Activated CD4-positive, alpha-beta T cell treated with anti-CD3 and anti-CD28 coated beads for 36 hours (primary cell): ENCODE measurements at regions of chr17 and their contacts with region 1.

Region 1: DNA sequence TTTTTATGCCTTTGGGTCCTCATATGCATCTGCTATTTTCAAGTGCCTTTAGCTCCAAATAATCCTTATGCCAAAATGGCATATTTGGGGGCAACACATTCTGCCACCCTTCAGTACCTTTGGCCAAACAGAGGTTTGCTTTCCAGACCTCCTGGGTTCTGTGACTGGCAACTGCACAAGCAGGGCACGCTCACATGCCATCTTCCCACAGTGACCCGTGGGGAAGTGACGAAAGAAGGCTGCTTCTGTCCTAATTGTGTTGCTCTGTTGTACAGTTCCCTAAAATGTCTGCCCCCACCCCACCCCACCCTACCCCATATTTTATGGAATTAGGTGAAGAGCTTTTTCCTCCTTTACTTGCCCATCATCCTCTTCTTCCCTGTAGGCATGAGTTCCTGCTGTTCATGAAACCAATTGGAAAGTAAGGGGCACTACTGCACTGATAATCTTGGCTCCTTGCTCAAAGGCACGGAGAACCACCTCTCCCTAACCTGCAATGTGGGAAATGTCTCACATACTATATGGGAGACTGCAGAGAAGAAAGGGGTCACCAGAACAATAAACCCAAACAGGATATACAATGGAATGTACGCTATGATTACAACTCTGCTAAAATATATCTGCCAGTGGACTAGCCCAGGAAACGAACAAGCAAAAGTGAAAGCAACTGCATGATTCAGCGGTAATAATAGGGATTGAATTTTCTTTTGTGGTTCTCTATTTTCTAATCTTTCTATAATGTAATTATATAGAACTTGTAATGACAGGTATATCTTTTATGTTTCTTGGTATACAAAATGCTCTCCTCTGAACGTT is 3.3 kb upstream of the SLFN12L start:
- DNase-seq: peak; percentile 62
- ATAC-seq: no peak
- H3K4me3 Mint-ChIP-seq: peak overlapping the region; percentile 78
- H3K27ac Mint-ChIP-seq: peak overlapping the region; percentile 100
- H3K4me1 Mint-ChIP-seq: peaks cover 48% of the 10 kb centered on the region
- H3K27me3 Mint-ChIP-seq: no peaks in the 10 kb centered on the region

Region 2: GRCh38 chr17:35170968-35171771 is 369.6 kb before region 1 on chr17:
- CTCF ChIA-PET with region 1: interaction called, 12 read pairs
- POLR2A ChIA-PET with region 1: interaction called, 4 read pairs
- intact Hi-C with region 1: loop called (anchors 1 kb)
- DNase-seq: peak; percentile 32
- ATAC-seq: peak; percentile 76
- H3K4me3 Mint-ChIP-seq: no peak overlapping the region
- H3K27ac Mint-ChIP-seq: peak overlapping the region; percentile 47
- H3K4me1 Mint-ChIP-seq: peaks cover 39% of the 10 kb centered on the region
- H3K27me3 Mint-ChIP-seq: no peaks in the 10 kb centered on the region

Region 3: DNA sequence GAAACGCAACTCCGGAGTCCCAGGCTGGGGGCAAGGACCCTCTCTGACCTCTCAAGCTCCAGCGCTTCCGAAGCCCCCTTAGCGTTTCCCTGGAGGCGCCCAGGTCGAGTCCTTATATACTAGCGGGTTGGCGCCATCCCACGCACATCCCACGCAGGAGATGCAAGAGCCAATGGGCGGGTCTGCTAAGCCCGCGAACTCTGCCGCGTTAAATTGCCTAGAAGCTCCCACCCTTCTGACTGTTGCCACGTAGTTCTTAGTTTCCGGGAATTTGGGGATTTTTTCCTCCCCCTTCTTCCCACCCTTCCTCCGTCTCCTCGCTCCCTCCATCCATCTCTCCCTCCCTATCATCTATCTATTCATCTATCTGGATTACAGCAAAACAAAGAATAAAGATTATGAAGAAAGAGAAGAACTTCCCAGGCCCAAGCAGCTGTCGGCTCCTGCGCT is 167.2 kb before region 1 on chr17 and contains the start of gene SLFN11:
- CTCF ChIA-PET with region 1: interaction called, 5 read pairs
- POLR2A ChIA-PET with region 1: interaction called, 32 read pairs
- intact Hi-C with region 1: loop called (anchors 1 kb)
- DNase-seq: peak; percentile 95
- ATAC-seq: peak; percentile 70
- H3K4me3 Mint-ChIP-seq: peak within 1 kb of the TSS; percentile 85
- H3K27ac Mint-ChIP-seq: peak within 1 kb of the TSS; percentile 98
- H3K4me1 Mint-ChIP-seq: peaks cover 50% of the 10 kb centered on the region
- H3K27me3 Mint-ChIP-seq: peaks cover 1% of the 10 kb centered on the region
- total RNA-seq, gene SLFN11: 63.7 to 67.9 TPM

Region 4: DNA sequence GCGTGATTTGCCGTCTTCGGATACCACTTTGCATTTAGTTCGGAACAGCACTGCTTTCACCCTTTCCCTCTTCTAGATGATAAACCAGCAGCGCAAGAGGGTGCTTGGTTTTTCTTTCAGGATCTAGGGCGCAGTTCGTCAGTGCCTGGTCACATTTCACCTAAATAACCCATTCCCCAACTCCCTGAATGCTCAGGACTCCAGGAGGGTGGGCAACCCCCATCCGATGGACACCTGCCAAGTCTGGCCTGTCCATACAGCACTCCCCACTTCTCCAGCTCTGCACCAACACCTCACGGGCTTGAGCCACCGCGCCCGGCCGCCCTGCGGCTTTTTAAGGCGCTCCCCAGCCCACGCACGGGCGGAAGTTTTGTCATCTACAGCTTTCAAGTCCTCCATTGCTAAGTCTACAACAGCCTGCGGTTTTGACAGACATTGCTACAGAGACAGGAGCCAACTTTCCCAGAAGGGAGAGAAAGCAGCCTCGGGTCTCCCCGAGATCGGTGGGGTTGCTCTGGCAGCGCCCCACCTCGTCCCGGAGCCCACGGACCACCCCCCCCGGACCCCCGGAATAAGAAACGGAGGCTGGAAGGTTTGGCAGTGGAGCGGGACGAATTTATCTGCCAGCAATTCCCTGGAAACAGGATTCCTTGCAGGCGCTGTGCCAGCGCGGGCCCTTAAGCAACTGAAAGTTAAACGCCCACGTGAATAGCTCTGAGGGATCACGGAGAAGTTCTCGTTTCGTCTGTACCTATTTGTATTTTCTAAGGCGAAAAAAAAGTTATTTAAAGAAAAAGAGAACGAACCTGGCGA is 53.7 kb before region 1 on chr17:
- CTCF ChIA-PET with region 1: interaction called, 6 read pairs
- POLR2A ChIA-PET with region 1: interaction called, 7 read pairs
- intact Hi-C with region 1: loop called (anchors 1 to 2 kb)
- DNase-seq: peak; percentile 92
- ATAC-seq: peak; percentile 71
- H3K4me3 Mint-ChIP-seq: peak overlapping the region; percentile 82
- H3K27ac Mint-ChIP-seq: peak overlapping the region; percentile 91
- H3K4me1 Mint-ChIP-seq: peaks cover 36% of the 10 kb centered on the region
- H3K27me3 Mint-ChIP-seq: peaks cover 11% of the 10 kb centered on the region

Region 5: DNA sequence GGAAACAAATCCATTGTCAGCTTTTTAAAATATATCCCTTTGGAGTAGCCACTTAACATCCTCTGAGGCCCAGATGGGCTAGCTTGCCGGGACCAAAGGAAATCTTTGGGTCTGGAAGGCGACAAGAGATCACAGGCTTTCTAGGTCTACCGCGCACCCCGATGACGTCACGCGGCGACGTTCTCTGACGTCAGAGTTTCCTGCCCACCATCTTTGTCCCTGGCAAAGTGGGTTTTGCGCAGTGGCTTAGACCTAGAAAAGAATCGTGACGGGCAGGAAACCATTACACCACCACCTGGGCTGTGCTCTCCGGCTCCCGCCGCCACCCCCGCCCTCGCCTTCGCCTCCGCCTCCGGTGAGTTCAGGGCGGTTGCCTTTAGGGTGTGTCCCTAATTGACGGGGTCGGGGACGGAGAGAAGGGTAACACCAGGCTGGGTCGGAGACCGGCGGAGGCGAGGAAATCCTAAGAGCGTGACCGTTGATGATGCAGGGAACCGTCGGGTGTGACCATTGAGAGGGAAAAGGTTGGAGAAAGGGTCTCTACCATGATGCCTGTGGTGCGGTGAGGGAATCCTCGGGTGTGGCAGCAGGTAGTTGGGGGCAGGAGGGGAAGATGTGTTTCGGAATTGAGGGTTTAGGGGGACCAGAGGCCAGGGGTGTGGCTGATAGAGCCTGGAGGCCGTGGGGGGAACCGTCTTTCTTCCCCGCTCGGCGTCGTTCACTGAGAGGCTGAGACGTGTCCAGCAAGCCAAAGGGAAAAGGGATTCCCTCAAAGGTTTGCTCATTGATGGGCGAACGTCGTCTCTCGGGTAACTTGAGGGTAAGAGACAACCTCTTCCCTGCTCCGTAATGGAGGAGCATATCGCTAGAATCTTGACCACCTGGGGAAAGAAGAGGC is 46.5 kb after region 1 on chr17 and contains the start of gene AP2B1:
- CTCF ChIA-PET with region 1: interaction called, 7 read pairs
- POLR2A ChIA-PET with region 1: interaction called, 4 read pairs
- intact Hi-C with region 1: loop called (anchors 1 kb)
- DNase-seq: peak; percentile 96
- ATAC-seq: peak; percentile 94
- H3K4me3 Mint-ChIP-seq: peak within 1 kb of the TSS; percentile 98
- H3K27ac Mint-ChIP-seq: peak within 1 kb of the TSS; percentile 98
- H3K4me1 Mint-ChIP-seq: peaks cover 25% of the 10 kb centered on the region
- H3K27me3 Mint-ChIP-seq: no peaks in the 10 kb centered on the region
- total RNA-seq, gene AP2B1: 166 to 184 TPM